ENCODE measurements at regions of chr7 and their contacts with region 1.

Region 1: DNA sequence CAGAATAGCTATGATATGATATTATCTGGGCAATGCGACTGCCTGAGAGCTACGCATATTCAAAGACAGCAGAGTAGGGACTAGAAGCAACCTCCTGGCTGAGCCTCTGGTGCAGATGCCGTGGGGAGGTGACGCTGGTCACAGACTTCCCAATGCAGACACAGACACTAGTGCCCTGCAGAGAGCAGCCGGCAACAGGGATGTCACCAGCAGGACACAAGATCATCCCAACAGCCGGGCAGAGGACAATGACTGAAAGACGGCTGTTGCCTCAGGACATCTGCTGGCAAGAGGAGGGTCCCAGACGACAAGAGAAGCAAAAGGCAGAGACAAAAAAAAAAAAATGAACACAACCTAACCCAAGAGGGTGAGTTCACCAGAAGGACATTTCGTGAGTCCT is 104.6 kb downstream of the CALN1 start:
- DNase-seq: no peak
- H3K4me3 ChIP-seq: no peak overlapping the region
- H3K27ac ChIP-seq: no peak overlapping the region
- H3K4me1 ChIP-seq: no peaks in the 10 kb centered on the region
- H3K27me3 ChIP-seq: no peaks in the 10 kb centered on the region
- CTCF ChIP-seq: no peak

Region 2: DNA sequence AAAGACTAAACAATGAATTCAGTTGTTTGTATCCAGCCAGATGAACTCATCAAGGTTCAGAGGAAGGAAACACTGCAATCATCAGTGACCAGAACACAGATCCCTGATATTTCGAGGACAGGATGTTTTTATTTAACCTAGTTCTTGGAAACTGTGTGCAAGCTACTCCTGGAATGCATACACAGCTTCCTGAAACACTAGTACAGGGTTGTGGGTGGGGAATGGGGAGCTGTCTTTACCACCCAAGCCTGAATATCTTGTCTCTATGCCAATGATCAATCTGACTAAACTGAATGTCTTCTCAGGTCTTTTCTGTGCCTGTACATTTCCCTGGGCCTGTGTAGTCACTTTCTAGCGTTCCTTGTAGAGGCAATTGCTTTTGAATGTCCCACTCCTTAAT is 270.1 kb before region 1 on chr7:
- CTCF ChIA-PET with region 1: no interaction called
- POLR2A ChIA-PET with region 1: no interaction called
- intact Hi-C with region 1: no loop called
- DNase-seq: no peak
- H3K4me3 ChIP-seq: no peak overlapping the region
- H3K27ac ChIP-seq: no peak overlapping the region
- H3K4me1 ChIP-seq: no peaks in the 10 kb centered on the region
- H3K27me3 ChIP-seq: no peaks in the 10 kb centered on the region
- CTCF ChIP-seq: no peak

Region 3: GRCh38 chr7:72326206-72326922 is 18.8 kb after region 1 on chr7:
- CTCF ChIA-PET with region 1: no interaction called
- POLR2A ChIA-PET with region 1: no interaction called
- intact Hi-C with region 1: no loop called
- DNase-seq: no peak
- H3K4me3 ChIP-seq: no peak overlapping the region
- H3K27ac ChIP-seq: no peak overlapping the region
- H3K4me1 ChIP-seq: no peaks in the 10 kb centered on the region
- H3K27me3 ChIP-seq: no peaks in the 10 kb centered on the region
- CTCF ChIP-seq: no peak

Region 4: DNA sequence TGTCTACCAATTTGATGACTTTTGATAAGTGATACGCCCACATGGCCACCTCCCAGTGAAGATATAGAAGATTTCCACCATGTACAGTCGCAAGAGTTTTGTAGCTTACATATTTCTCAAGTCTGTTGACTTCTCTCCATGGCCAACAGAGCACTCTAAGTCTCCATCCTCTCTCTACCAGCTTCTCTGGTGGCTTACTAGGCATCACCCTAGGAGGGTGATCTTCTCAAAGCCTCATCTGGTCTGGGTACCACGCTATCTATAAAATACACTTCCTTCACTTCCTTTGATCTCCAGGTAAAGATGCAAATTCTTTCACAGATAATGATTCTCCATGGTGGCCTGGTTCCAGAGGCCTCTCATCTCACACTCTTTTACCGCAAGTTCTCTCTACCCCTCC is 54.7 kb after region 1 on chr7:
- CTCF ChIA-PET with region 1: no interaction called
- POLR2A ChIA-PET with region 1: no interaction called
- intact Hi-C with region 1: loop called (anchors 10 kb)
- DNase-seq: no peak
- H3K4me3 ChIP-seq: no peak overlapping the region
- H3K27ac ChIP-seq: no peak overlapping the region
- H3K4me1 ChIP-seq: no peaks in the 10 kb centered on the region
- H3K27me3 ChIP-seq: no peaks in the 10 kb centered on the region
- CTCF ChIP-seq: no peak